PC-3 (cell line): ENCODE measurements at regions of chr2 and their contacts with region 1.

Region 1: GRCh38 chr2:239648607-239649006 is 247.8 kb upstream of the HDAC4 start:
- DNase-seq: no peak
- ATAC-seq: no peak
- H3K4me3 ChIP-seq: no peak overlapping the region
- H3K27ac ChIP-seq: no peak overlapping the region
- H3K4me1 ChIP-seq: no peaks in the 10 kb centered on the region
- H3K27me3 ChIP-seq: peaks cover 33% of the 10 kb centered on the region
- CTCF ChIP-seq: no peak

Region 2: GRCh38 chr2:239544143-239544917 is 104.3 kb before region 1 on chr2:
- CTCF ChIA-PET with region 1: no interaction called
- POLR2A ChIA-PET with region 1: no interaction called
- intact Hi-C with region 1: no loop called
- DNase-seq: no peak
- ATAC-seq: no peak
- H3K4me3 ChIP-seq: no peak overlapping the region
- H3K27ac ChIP-seq: no peak overlapping the region
- H3K4me1 ChIP-seq: peaks cover 4% of the 10 kb centered on the region; the same call in 1 of the 2 replicates
- H3K27me3 ChIP-seq: peaks cover 69% of the 10 kb centered on the region
- CTCF ChIP-seq: no peak

Region 3: DNA sequence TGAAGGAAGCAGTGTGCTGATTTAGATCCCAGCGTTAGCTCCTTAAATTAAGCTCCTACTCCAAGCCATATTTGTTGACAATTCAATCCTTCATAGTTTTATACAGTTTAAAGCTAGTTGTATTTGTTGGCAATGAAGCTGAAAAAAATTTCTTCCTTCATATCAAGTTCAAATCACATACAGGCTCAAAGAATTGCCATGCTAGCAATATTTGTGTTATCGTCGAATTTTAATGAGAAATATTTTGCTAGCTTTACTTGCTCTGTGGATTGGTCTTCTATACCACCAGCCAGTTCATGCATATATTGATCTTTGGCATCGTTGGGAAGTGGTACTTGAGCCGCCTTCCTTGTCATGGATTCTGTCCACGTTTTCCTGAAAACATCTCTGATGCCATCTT is 43.2 kb before region 1 on chr2:
- CTCF ChIA-PET with region 1: no interaction called
- POLR2A ChIA-PET with region 1: interaction called, 10 read pairs
- intact Hi-C with region 1: no loop called
- DNase-seq: no peak
- ATAC-seq: no peak
- H3K4me3 ChIP-seq: no peak overlapping the region
- H3K27ac ChIP-seq: no peak overlapping the region
- H3K4me1 ChIP-seq: no peaks in the 10 kb centered on the region
- H3K27me3 ChIP-seq: peaks cover 96% of the 10 kb centered on the region
- CTCF ChIP-seq: no peak